Activated B cell treated with CpG ODN at 0.5 μM for 24 hours (primary cell): ENCODE measurements at regions of chr20 and their contacts with region 1.

Region 1: DNA sequence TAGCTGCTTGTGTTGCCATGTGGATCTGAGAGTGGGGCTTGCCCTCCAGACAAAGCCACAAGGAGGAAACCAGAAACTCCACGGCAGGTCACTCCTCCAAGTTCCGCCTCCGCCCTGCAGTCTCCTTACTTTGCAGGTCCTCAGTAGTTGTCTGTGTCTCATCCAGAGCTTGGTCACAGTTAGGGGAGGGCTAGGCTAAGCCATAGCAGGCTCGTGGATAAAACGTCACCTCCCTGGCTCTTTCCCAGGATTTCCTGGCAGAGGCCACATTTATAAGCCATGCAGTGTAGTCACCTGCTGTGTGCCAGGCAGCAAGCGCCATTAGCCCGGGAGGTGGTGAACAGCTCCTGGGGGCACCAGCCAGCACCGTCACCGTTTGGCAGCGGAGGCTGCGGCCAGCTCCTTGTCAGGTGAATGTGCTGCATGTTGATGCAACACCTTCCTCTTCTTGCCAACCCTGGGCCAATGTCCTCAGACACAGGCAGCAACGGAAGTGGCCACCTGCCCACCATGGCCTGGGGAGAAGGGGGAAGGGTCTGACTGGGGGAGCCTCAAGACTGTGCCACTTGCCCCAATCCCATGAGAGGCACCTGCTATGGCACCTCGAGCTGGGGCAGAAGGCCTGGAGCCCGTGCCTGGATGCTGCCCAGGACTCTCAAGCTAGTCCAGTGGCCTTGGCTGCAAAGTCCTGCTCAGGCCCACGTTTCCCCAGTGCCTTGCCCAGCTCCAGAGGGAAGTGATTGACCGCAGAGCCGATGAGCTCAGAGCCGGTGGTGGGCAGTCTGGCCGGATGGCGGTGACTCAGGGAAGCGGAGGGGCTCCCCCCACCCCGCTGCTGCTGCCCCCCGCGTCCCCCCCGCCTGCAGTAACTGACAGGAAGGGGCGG is 39.0 kb upstream of the SLCO4A1 start:
- DNase-seq: peak; percentile 40
- ATAC-seq: peak; percentile 47
- H3K4me3 Mint-ChIP-seq: peak overlapping the region; percentile 64
- H3K27ac Mint-ChIP-seq: peak overlapping the region; percentile 67
- H3K4me1 Mint-ChIP-seq: peaks cover 86% of the 10 kb centered on the region
- H3K27me3 Mint-ChIP-seq: no peaks in the 10 kb centered on the region
- CTCF ChIP-seq: no peak

Region 2: GRCh38 chr20:61976644-61977490 is 626.4 kb before region 1 on chr20:
- CTCF ChIA-PET with region 1: no interaction called
- POLR2A ChIA-PET with region 1: no interaction called
- intact Hi-C with region 1: no loop called
- DNase-seq: no peak
- ATAC-seq: no peak
- H3K4me3 Mint-ChIP-seq: no peak overlapping the region
- H3K27ac Mint-ChIP-seq: no peak overlapping the region
- H3K4me1 Mint-ChIP-seq: peaks cover 7% of the 10 kb centered on the region
- H3K27me3 Mint-ChIP-seq: no peaks in the 10 kb centered on the region
- CTCF ChIP-seq: no peak

Region 3: GRCh38 chr20:62500237-62500864 is 102.9 kb before region 1 on chr20:
- CTCF ChIA-PET with region 1: interaction called, 4 read pairs
- POLR2A ChIA-PET with region 1: interaction called, 3 read pairs
- intact Hi-C with region 1: loop called (anchors 5 kb)
- DNase-seq: peak; percentile 77
- ATAC-seq: peak; percentile 49
- H3K4me3 Mint-ChIP-seq: no peak overlapping the region
- H3K27ac Mint-ChIP-seq: peak overlapping the region; percentile 67
- H3K4me1 Mint-ChIP-seq: peaks cover 42% of the 10 kb centered on the region
- H3K27me3 Mint-ChIP-seq: no peaks in the 10 kb centered on the region
- CTCF ChIP-seq: peak; percentile 33

Region 4: DNA sequence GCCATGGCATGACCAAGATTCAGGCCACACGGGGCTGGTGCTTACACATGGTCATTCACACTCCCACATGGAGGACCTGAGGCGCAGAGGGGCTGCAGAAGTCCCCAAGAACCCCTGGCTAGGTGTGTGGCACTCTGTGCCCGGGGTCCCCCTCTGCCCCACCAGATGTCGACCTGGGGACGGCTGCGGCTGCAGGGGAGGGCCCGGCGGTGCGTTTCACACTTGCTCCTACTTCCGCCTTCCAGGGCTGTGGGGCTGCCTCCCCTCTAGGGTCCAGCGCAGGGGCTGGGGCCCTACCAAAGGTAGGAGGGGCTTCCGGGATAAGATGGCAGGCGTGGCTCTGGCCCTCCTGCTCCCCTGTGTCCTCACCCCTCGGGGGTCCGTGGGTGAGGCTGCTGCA is 42.1 kb before region 1 on chr20:
- CTCF ChIA-PET with region 1: no interaction called
- POLR2A ChIA-PET with region 1: interaction called, 5 read pairs
- intact Hi-C with region 1: loop called (anchors 5 kb)
- DNase-seq: no peak
- ATAC-seq: peak; percentile 68
- H3K4me3 Mint-ChIP-seq: no peak overlapping the region
- H3K27ac Mint-ChIP-seq: no peak overlapping the region
- H3K4me1 Mint-ChIP-seq: peaks cover 5% of the 10 kb centered on the region
- H3K27me3 Mint-ChIP-seq: peaks cover 5% of the 10 kb centered on the region
- CTCF ChIP-seq: no peak

Region 5: GRCh38 chr20:62616728-62617621 is 13.7 kb after region 1 on chr20:
- CTCF ChIA-PET with region 1: interaction called, 10 read pairs
- POLR2A ChIA-PET with region 1: interaction called, 32 read pairs
- intact Hi-C with region 1: loop called (anchors 1 kb)
- DNase-seq: peak; percentile 73
- ATAC-seq: peak; percentile 61
- H3K4me3 Mint-ChIP-seq: peak overlapping the region; percentile 73
- H3K27ac Mint-ChIP-seq: peak overlapping the region; percentile 93
- H3K4me1 Mint-ChIP-seq: peaks cover 45% of the 10 kb centered on the region
- H3K27me3 Mint-ChIP-seq: no peaks in the 10 kb centered on the region
- CTCF ChIP-seq: peak; percentile 84

Region 6: DNA sequence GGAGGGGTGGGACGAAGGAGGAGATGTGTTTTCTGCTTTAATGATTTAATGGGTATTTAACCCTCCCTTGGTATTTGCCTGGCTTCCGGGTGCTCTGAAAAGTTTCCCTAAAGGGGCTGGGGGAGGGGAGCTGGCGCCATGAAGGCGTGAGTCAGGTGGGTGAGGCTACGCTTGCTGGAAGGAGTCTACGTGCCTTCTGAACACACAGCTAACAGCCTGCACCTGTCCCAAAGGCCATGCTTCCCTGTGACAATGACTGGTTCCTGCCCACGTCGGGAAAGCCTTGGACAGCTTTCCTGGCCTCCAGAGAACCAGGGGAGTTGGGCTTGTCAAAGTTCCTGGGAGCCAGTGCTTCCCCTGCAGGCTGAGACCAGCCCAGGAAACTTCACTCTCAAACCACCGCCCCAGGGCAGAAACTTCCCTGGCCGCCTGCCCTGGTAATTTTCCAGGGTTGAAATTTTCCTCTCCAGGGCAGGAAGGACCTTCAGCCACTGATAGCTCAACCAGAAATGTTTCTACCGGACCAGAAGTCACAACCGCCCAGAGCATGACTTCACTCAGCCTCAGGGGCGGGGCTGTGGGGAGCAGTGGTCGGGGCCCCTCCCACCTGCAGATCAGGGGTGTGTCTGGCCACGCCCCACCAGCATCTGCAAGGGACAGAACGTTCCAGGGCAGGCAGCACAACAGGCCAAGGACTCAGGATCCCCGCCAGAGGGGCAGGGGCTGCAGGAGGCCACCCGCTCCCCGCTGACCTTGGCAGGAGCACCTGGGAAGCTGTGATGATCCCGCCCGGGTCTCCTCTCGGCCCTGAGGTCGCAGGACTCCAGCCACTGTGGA is 20.4 kb after region 1 on chr20:
- CTCF ChIA-PET with region 1: no interaction called
- POLR2A ChIA-PET with region 1: interaction called, 32 read pairs
- intact Hi-C with region 1: loop called (anchors 1 kb)
- DNase-seq: peak; percentile 82
- ATAC-seq: peak; percentile 87
- H3K4me3 Mint-ChIP-seq: peak overlapping the region; percentile 80
- H3K27ac Mint-ChIP-seq: peak overlapping the region; percentile 98
- H3K4me1 Mint-ChIP-seq: peaks cover 43% of the 10 kb centered on the region
- H3K27me3 Mint-ChIP-seq: no peaks in the 10 kb centered on the region
- CTCF ChIP-seq: no peak

Region 7: DNA sequence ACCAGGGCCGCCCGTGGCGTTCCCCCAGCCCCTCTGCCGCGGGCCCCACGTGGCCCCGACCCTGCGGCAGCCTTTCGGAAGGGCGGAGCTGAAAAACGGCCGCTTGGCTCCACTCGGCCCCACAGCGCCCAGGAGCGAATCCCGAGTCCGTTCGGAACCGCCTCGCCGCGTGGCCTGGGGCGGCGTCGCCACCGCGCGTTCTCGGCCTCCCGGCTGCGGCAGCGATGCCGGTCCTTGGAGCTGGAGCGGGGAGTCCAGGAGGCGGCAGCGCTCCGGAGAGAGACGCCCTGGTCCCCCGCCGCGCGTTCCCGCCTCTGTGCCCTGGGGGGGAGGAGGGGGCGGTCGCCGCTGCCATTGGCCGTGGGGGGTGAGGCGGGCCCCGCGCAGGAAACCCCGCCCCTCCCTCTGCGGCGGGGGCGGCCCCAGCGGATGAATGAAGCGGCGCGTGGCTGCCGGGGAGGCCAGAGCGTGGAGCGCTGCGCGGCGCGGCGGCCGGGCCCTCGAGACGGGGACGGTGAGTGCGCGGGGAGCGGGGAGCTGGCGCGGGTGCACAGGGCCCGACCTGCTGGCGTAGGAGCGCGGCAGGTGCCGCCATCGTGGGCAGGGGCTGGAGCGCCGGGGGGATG is 38.9 kb after region 1 on chr20 and contains the start of gene SLCO4A1:
- CTCF ChIA-PET with region 1: no interaction called
- POLR2A ChIA-PET with region 1: interaction called, 14 read pairs
- intact Hi-C with region 1: no loop called
- DNase-seq: peak; percentile 90
- ATAC-seq: peak; percentile 91
- H3K4me3 Mint-ChIP-seq: peak within 1 kb of the TSS; percentile 87
- H3K27ac Mint-ChIP-seq: peak within 1 kb of the TSS; percentile 72
- H3K4me1 Mint-ChIP-seq: peaks cover 41% of the 10 kb centered on the region
- H3K27me3 Mint-ChIP-seq: no peaks in the 10 kb centered on the region
- CTCF ChIP-seq: no peak
- total RNA-seq, gene SLCO4A1: 27.8 and 38.9 TPM in 2 replicates

Region 8: GRCh38 chr20:62652051-62652926 is 49.0 kb after region 1 on chr20:
- CTCF ChIA-PET with region 1: interaction called, 4 read pairs
- POLR2A ChIA-PET with region 1: interaction called, 14 read pairs
- intact Hi-C with region 1: no loop called
- DNase-seq: peak; percentile 55
- ATAC-seq: peak; percentile 55
- H3K4me3 Mint-ChIP-seq: peak overlapping the region; percentile 82
- H3K27ac Mint-ChIP-seq: peak overlapping the region; percentile 94
- H3K4me1 Mint-ChIP-seq: peaks cover 63% of the 10 kb centered on the region
- H3K27me3 Mint-ChIP-seq: no peaks in the 10 kb centered on the region
- CTCF ChIP-seq: no peak